B cell (primary cell): ENCODE measurements at regions of chr3 and their contacts with region 1.

Region 1: GRCh38 chr3:191136347-191136746 is 62.7 kb upstream of the OSTN start:
- DNase-seq: peak; percentile 45
- ATAC-seq: no peak
- H3K4me3 ChIP-seq: no peak overlapping the region
- H3K4me3 Mint-ChIP-seq: peak overlapping the region; percentile 18
- H3K27ac ChIP-seq: no peak overlapping the region
- H3K27ac Mint-ChIP-seq: peak overlapping the region; percentile 4
- H3K4me1 ChIP-seq: peaks cover 15 to 28% of the 10 kb centered on the region in 2 donors
- H3K4me1 Mint-ChIP-seq: peaks cover 40% of the 10 kb centered on the region
- H3K27me3 ChIP-seq: no peaks in the 10 kb centered on the region
- H3K27me3 Mint-ChIP-seq: no peaks in the 10 kb centered on the region
- CTCF ChIP-seq: peak; percentile 45

Region 2: GRCh38 chr3:191388823-191389222 is 252.5 kb after region 1 on chr3:
- CTCF ChIA-PET with region 1: interaction called, 4 read pairs
- POLR2A ChIA-PET with region 1: no interaction called
- intact Hi-C with region 1: loop called (anchors 2 kb)
- DNase-seq: peak; percentile 23
- ATAC-seq: no peak
- H3K4me3 ChIP-seq: no peak overlapping the region
- H3K4me3 Mint-ChIP-seq: no peak overlapping the region
- H3K27ac ChIP-seq: no peak overlapping the region
- H3K27ac Mint-ChIP-seq: no peak overlapping the region
- H3K4me1 ChIP-seq: no peaks in the 10 kb centered on the region
- H3K4me1 Mint-ChIP-seq: peaks cover 15% of the 10 kb centered on the region
- H3K27me3 ChIP-seq: no peaks in the 10 kb centered on the region
- H3K27me3 Mint-ChIP-seq: no peaks in the 10 kb centered on the region
- CTCF ChIP-seq: peak; percentile 69

Region 3: DNA sequence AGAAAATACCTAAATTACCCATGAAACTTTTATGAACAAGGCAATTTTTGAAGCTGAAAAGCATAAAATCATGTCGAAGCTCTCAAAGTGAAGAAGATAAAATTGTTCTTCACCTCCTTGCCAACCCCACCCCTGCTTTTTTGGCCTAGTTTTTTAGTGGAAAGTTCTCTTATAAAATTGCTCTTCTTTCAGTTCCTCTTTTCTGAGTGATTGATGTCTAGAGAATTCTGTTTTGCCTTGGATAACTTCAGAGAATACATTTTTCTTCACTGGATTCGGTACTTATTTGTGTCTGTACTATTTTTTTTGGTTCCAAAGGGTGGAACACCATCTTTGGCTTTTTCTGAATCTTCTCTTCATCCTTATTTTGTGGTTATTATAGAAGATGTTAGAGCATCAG is 299.6 kb after region 1 on chr3:
- CTCF ChIA-PET with region 1: no interaction called
- POLR2A ChIA-PET with region 1: interaction called, 10 read pairs
- intact Hi-C with region 1: no loop called
- DNase-seq: peak; percentile 6
- ATAC-seq: no peak
- H3K4me3 ChIP-seq: no peak overlapping the region
- H3K4me3 Mint-ChIP-seq: no peak overlapping the region
- H3K27ac ChIP-seq: no peak overlapping the region
- H3K27ac Mint-ChIP-seq: no peak overlapping the region
- H3K4me1 ChIP-seq: no peaks in the 10 kb centered on the region
- H3K4me1 Mint-ChIP-seq: peaks cover 5% of the 10 kb centered on the region
- H3K27me3 ChIP-seq: peaks cover 0 to 2% (median 0%) of the 10 kb centered on the region in 4 experiments
- H3K27me3 Mint-ChIP-seq: peaks cover 16% of the 10 kb centered on the region
- CTCF ChIP-seq: no peak